A673 (cell line): ENCODE measurements at regions of chr9 and their contacts with region 1.

Region 1: GRCh38 chr9:128117613-128118471 is 9.7 kb downstream of the PTGES2 start:
- DNase-seq: peak; percentile 92
- H3K4me3 ChIP-seq: no peak overlapping the region
- H3K27ac ChIP-seq: no peak overlapping the region
- H3K4me1 ChIP-seq: peaks cover 6% of the 10 kb centered on the region
- H3K27me3 ChIP-seq: no peaks in the 10 kb centered on the region
- CTCF ChIP-seq: peak; percentile 100

Region 2: GRCh38 chr9:127928664-127929021 is 189.2 kb before region 1 on chr9:
- CTCF ChIA-PET with region 1: interaction called, 8 read pairs
- POLR2A ChIA-PET with region 1: interaction called, 11 read pairs
- intact Hi-C with region 1: no loop called
- DNase-seq: no peak
- H3K4me3 ChIP-seq: no peak overlapping the region
- H3K27ac ChIP-seq: no peak overlapping the region
- H3K4me1 ChIP-seq: peaks cover 10% of the 10 kb centered on the region
- H3K27me3 ChIP-seq: no peaks in the 10 kb centered on the region
- CTCF ChIP-seq: no peak

Region 3: DNA sequence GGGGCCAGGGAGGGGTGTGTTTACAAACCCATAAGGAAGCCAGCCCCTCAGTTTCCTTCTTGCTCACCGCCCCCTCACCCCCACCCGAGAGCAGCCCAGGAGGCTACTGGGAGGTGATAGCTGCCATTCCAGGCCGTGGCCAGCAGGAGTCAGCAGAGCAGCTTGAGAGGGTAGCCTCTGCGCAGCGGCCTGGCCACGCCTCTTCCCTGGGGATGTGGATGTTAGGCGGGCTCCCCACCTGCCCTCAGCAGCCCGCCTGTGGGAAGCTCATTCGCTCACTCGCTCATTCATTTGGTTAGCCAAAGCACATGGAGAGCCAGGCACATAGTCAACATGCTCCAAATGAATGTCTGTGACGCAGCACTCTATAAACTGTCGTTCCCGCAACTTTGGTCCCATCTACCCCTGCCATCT is 174.1 kb before region 1 on chr9:
- CTCF ChIA-PET with region 1: interaction called, 5 read pairs
- POLR2A ChIA-PET with region 1: no interaction called
- intact Hi-C with region 1: loop called (anchors 2 kb)
- DNase-seq: peak; percentile 88
- H3K4me3 ChIP-seq: no peak overlapping the region
- H3K27ac ChIP-seq: no peak overlapping the region
- H3K4me1 ChIP-seq: peaks cover 7% of the 10 kb centered on the region
- H3K27me3 ChIP-seq: no peaks in the 10 kb centered on the region
- CTCF ChIP-seq: peak; percentile 94

Region 4: GRCh38 chr9:128412120-128412790 is 294.4 kb after region 1 on chr9:
- CTCF ChIA-PET with region 1: no interaction called
- POLR2A ChIA-PET with region 1: no interaction called
- intact Hi-C with region 1: loop called (anchors 5 kb)
- DNase-seq: peak; percentile 88
- H3K4me3 ChIP-seq: no peak overlapping the region
- H3K27ac ChIP-seq: no peak overlapping the region
- H3K4me1 ChIP-seq: peaks cover 15% of the 10 kb centered on the region
- H3K27me3 ChIP-seq: no peaks in the 10 kb centered on the region
- CTCF ChIP-seq: peak; percentile 87